AG04450 (cell line): ENCODE measurements at regions of chr1 and their contacts with region 1.

Region 1: DNA sequence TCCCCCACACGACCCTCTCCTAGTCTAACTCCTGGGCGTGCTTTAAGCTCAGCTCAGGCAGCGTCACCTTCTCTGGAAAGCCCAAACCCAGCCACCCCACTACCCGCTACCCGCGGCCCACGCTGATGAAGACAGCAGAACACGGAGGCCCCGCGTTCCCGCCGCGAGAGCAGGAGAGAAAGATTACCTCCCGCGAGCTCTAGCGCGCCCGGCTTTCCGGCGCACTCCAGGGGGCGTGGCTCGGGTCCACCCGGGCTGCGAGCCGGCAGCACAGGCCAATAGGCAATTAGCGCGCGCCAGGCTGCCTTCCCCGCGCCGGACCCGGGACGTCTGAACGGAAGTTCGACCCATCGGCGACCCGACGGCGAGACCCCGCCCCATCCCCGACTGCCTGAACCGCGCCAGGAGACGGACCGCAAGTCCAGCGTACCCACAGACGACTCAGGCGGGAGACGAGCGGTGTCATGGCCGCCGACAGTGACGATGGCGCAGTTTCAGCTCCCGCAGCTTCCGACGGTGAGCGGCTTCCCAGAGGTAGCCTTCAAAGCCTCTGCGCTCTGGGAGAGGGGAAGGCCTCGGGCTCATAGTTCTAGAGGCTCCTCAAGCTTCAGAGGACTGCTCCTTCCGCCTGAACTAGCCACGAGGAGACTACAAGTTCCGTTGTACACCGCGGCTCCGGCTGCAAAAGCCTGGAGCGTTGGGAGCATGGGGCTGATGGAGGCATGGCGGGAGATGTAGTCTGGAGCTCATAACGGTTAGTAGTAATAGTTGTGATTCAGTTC is at the starts of genes MUTYH and TOE1:
- DNase-seq: peak; percentile 70
- H3K4me3 ChIP-seq: peak within 1 kb of the TSS; percentile 73
- H3K27ac ChIP-seq: peak within 1 kb of the TSS; percentile 94
- H3K27me3 ChIP-seq: no peaks in the 10 kb centered on the region
- CTCF ChIP-seq: peak; percentile 11; the same call in 1 of the 2 replicates
- polyA plus RNA-seq, gene MUTYH: 5.8 and 6.2 TPM in 2 replicates
- polyA plus RNA-seq, gene TOE1: 8.1 and 10.1 TPM in 2 replicates

Region 2: DNA sequence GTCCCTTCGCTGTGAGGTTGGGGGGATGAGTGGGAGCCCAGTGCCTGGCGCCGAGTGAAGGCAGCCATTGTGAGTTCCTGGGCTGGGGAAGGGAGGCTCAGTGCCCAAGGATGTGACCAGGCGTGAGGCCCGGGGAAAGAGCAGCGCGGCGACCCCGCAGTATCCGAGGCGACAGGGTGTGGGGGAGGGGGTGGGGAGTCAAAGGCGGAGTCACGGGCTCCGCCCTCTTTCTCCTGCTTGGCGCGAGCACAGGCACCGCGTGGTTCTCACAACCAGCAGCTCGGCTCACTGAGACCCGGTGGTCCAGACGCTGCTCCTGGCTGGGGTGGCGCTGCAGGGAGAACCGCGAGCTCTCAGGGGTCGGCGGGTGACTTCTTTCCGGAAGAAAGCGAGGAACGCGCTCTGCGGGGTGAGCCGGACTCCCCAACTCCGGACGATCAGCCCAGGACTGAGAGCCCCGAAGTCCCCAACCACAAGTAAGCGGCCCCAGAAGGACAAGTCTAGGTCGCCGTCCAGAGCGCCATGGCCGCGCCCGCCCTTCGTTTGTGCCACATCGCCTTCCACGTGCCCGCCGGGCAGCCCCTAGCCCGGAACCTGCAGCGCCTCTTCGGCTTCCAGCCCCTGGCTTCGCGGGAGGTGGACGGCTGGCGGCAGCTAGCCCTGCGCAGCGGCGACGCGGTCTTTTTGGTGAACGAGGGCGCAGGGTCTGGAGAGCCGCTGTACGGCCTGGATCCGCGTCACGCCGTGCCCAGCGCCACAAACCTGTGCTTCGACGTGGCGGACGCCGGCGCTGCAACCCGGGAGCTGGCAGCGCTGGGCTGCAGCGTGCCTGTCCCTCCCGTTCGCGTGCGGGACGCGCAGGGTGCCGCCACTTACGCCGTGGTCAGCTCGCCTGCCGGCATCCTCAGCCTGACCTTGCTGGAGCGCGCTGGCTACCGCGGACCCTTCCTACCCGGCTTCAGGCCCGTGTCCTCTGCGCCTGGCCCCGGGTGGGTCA is 13.1 kb before region 1 on chr1 and contains the start of gene HPDL:
- CTCF ChIA-PET with region 1: interaction called, 4 read pairs
- POLR2A ChIA-PET with region 1: interaction called, 13 read pairs
- DNase-seq: no peak
- H3K4me3 ChIP-seq: peak within 1 kb of the TSS; percentile 65
- H3K27ac ChIP-seq: no peak within 1 kb of the TSS
- H3K27me3 ChIP-seq: no peaks in the 10 kb centered on the region
- CTCF ChIP-seq: no peak
- polyA plus RNA-seq, gene HPDL: 0.22 and 0.50 TPM in 2 replicates